HEK293T (cell line): ENCODE measurements at regions of chr16 and their contacts with region 1.

Region 1: GRCh38 chr16:79334127-79334526 is 266.4 kb downstream of the MAF start:
- DNase-seq: peak; percentile 58

Region 2: GRCh38 chr16:79347277-79347676 is 13.2 kb after region 1 on chr16:
- CTCF ChIA-PET with region 1: interaction called, 10 read pairs
- POLR2A ChIA-PET with region 1: no interaction called
- DNase-seq: no peak